Spleen (tissue), 13 donors: ENCODE measurements at regions of chr3 and their contacts with region 1.

Region 1: GRCh38 chr3:42190701-42191462 is 75.1 kb downstream of the CCK start:
- DNase-seq: no peak
- H3K4me3 ChIP-seq: no peak overlapping the region
- H3K27ac ChIP-seq: peak overlapping the region in 1 of 8 donors; percentile 5
- H3K4me1 ChIP-seq: peaks cover 12 to 53% (median 32%) of the 10 kb centered on the region in 6 donors
- H3K27me3 ChIP-seq: no peaks in the 10 kb centered on the region
- CTCF ChIP-seq: peak; percentile 41 to 84 (median 70)
- POLR2A ChIP-seq: no peak

Region 2: DNA sequence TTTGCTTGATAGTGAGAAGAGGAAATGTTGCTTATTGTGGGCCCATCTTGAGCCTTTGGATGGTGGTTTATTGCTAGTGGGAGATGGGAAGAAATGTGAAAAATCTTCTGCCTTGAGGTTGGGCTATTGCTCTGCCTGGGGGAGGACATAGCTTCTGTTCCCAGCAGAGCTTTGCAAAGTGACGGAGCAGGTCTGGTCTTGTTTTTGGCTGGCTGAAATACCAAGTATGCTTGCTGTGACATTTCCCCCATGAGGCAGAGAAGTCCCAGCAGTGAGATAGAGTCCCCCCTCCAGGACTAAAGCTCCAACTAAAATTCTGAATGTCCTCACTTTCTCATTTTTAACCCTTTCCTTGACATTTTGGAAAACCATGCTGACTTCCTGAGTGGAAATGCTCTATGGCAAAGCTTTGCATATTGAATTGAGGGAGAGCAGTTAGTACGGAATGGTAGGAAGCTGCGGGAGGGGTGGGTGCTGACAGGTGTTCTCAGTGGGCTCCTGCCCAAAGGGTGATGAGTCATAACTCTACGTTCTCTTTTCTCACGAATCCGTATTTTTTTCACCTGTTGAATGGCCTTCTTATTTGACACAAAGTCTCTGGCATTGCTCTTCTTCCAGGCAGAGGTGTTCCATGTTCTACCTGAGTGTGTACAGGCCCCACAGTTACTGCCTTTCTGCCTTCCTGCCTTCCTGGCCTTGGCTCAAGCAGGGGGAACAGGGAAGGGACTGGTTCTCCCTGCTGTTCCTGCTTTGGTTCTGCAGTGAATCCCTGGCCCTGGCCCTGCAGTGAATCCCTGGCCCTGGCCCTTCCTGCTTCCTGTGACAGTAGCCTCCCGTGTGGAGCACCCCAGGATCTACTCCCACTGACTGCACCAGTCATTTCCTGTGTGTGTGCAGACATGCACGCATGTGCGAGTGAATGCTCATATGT is 68.0 kb before region 1 on chr3:
- intact Hi-C with region 1: loop called (anchors 10 kb)
- DNase-seq: peak; percentile 86
- H3K4me3 ChIP-seq: no peak overlapping the region
- H3K27ac ChIP-seq: peak overlapping the region; percentile 9 to 84 (median 68)
- H3K4me1 ChIP-seq: peaks cover 25 to 75% (median 53%) of the 10 kb centered on the region in 6 donors
- H3K27me3 ChIP-seq: no peaks in the 10 kb centered on the region
- CTCF ChIP-seq: no peak
- POLR2A ChIP-seq: no peak

Region 3: DNA sequence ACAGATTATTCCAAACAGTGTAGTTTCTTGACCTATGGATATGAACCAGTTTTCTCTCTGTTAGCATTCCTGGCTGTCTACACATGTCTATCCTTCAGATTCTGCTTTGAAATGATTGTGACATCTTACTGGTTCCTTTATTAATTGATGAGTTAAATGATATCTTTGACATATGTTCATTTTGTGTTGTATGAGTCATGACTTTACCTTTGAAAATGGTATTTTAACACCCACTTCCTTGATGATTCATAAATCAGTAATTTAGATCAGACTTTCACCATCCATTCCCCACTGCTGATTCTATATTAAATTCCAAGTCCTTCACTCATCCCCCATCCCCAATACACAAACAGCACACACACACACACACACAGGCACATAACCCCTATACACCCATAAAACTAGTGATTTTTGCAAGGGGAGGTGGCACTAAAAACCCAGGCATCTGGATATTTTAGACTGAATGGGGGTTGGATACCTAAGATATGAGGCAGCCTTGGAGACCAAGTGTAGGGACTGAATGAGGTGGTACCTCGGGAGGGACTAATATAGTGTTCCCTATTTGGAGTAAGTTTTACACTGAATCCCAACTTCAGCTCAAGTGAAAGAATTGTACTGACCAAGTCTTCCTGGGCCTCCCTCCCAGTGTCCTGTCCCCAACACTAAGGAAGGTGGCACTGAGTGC is 65.4 kb after region 1 on chr3:
- intact Hi-C with region 1: no loop called
- DNase-seq: no peak
- H3K4me3 ChIP-seq: no peak overlapping the region
- H3K27ac ChIP-seq: no peak overlapping the region
- H3K4me1 ChIP-seq: no peaks in the 10 kb centered on the region
- H3K27me3 ChIP-seq: peaks cover 0 to 60% (median 4%) of the 10 kb centered on the region in 7 donors
- CTCF ChIP-seq: no peak
- POLR2A ChIP-seq: no peak